CD4-positive, alpha-beta T cell (primary cell): ENCODE measurements at regions of chr11 and their contacts with region 1.

Region 1: DNA sequence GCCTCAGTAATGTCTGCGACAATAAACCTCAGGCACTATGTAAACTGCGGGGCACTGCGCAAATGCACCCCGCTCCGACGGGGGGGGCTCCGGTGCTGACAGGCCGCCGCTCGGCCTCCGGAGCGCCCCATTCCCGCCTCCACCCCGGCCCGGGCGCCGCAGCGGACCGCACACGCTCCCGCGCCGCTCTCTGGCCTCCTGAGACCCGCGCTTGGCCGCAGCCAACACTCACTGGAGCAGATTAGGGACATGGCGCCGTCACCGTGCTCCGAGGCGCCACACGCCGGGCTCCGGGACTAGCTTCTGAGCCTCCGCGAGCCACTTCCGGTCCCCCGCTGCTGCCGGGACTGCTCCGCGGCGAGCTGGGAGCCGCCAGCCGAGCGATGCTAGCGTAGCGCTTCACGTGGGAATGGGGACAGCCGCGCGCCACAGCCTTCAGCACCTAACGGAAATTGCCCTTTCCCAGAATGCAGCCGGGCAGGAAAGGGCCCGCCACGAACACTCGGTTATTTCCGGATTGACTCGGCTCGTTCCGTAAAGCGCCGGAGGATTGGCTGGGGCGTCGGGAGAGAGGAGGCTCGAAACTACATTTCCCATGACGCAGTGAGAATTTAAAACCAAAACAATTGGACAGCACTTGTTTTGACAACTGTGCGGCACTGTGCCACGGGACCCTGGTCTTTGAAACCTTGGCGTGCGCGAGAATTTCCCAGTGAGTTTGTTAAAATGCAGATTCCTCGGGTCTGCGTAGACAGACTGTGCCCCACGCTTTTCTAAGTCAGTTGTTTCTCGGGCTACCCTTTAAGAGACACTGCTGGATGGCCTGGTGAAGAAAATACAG is at the start of gene PRPF19:
- DNase-seq: peak; percentile 97 to 100 (median 99)
- ATAC-seq: peak; percentile 93
- H3K4me3 ChIP-seq: peak within 1 kb of the TSS; percentile 66
- H3K4me3 Mint-ChIP-seq: peak within 1 kb of the TSS; percentile 93
- H3K27ac ChIP-seq: peak within 1 kb of the TSS; percentile 85 to 93
- H3K27ac Mint-ChIP-seq: peak within 1 kb of the TSS; percentile 96
- H3K4me1 ChIP-seq: peaks cover 42% of the 10 kb centered on the region
- H3K4me1 Mint-ChIP-seq: peaks cover 56% of the 10 kb centered on the region
- H3K27me3 ChIP-seq: no peaks in the 10 kb centered on the region
- H3K27me3 Mint-ChIP-seq: no peaks in the 10 kb centered on the region
- CTCF ChIP-seq: no peak
- total RNA-seq, gene PRPF19: 63.2 to 67.3 TPM

Region 2: GRCh38 chr11:60265373-60266214 is 640.8 kb before region 1 on chr11:
- CTCF ChIA-PET with region 1: no interaction called
- POLR2A ChIA-PET with region 1: no interaction called
- intact Hi-C with region 1: no loop called
- DNase-seq: peak in 3 of 14 experiments; percentile 24 to 51 (median 46)
- ATAC-seq: no peak
- H3K4me3 ChIP-seq: no peak overlapping the region
- H3K4me3 Mint-ChIP-seq: no peak overlapping the region
- H3K27ac ChIP-seq: no peak overlapping the region
- H3K27ac Mint-ChIP-seq: no peak overlapping the region
- H3K4me1 ChIP-seq: no peaks in the 10 kb centered on the region
- H3K4me1 Mint-ChIP-seq: no peaks in the 10 kb centered on the region
- H3K27me3 ChIP-seq: no peaks in the 10 kb centered on the region
- H3K27me3 Mint-ChIP-seq: peaks cover 9% of the 10 kb centered on the region
- CTCF ChIP-seq: peak; percentile 64

Region 3: GRCh38 chr11:60841797-60842667 is 64.3 kb before region 1 on chr11 and contains the start of gene CCDC86:
- CTCF ChIA-PET with region 1: no interaction called
- POLR2A ChIA-PET with region 1: interaction called, 3 read pairs
- intact Hi-C with region 1: loop called (anchors 2 to 5 kb)
- DNase-seq: peak; percentile 96 to 100 (median 98)
- ATAC-seq: peak; percentile 96
- H3K4me3 ChIP-seq: peak within 1 kb of the TSS; percentile 99
- H3K4me3 Mint-ChIP-seq: peak within 1 kb of the TSS; percentile 78
- H3K27ac ChIP-seq: peak within 1 kb of the TSS; percentile 61 to 72
- H3K27ac Mint-ChIP-seq: peak within 1 kb of the TSS; percentile 81
- H3K4me1 ChIP-seq: peaks cover 48% of the 10 kb centered on the region
- H3K4me1 Mint-ChIP-seq: peaks cover 42% of the 10 kb centered on the region
- H3K27me3 ChIP-seq: no peaks in the 10 kb centered on the region
- H3K27me3 Mint-ChIP-seq: no peaks in the 10 kb centered on the region
- CTCF ChIP-seq: no peak
- total RNA-seq, gene CCDC86: 8.0 to 9.0 TPM

Region 4: GRCh38 chr11:61361686-61362541 is 455.6 kb after region 1 on chr11 and contains the starts of genes CYB561A3 and TMEM138:
- CTCF ChIA-PET with region 1: no interaction called
- POLR2A ChIA-PET with region 1: no interaction called
- intact Hi-C with region 1: loop called in 1 of 2 experiments (anchors 10 kb)
- DNase-seq: peak; percentile 75 to 94 (median 82)
- ATAC-seq: peak; percentile 84
- H3K4me3 ChIP-seq: peak within 1 kb of the TSS; percentile 99
- H3K4me3 Mint-ChIP-seq: peak within 1 kb of the TSS; percentile 99
- H3K27ac ChIP-seq: peak within 1 kb of the TSS; percentile 95 to 100
- H3K27ac Mint-ChIP-seq: peak within 1 kb of the TSS; percentile 100
- H3K4me1 ChIP-seq: peaks cover 35% of the 10 kb centered on the region
- H3K4me1 Mint-ChIP-seq: peaks cover 36% of the 10 kb centered on the region
- H3K27me3 ChIP-seq: no peaks in the 10 kb centered on the region
- H3K27me3 Mint-ChIP-seq: no peaks in the 10 kb centered on the region
- CTCF ChIP-seq: no peak
- total RNA-seq, gene CYB561A3: 24.4 to 25.8 TPM
- total RNA-seq, gene TMEM138: 59.2 to 60.9 TPM

Region 5: GRCh38 chr11:61581030-61581928 is 674.9 kb after region 1 on chr11 and contains the start of gene SYT7:
- CTCF ChIA-PET with region 1: no interaction called
- POLR2A ChIA-PET with region 1: no interaction called
- intact Hi-C with region 1: loop called in 1 of 2 experiments (anchors 5 kb)
- DNase-seq: peak; percentile 86 to 96 (median 94)
- ATAC-seq: peak; percentile 86
- H3K4me3 ChIP-seq: peak within 1 kb of the TSS; percentile 28
- H3K4me3 Mint-ChIP-seq: peak within 1 kb of the TSS; percentile 97
- H3K27ac ChIP-seq: no peak within 1 kb of the TSS
- H3K27ac Mint-ChIP-seq: peak within 1 kb of the TSS; percentile 78
- H3K4me1 ChIP-seq: peaks cover 19% of the 10 kb centered on the region
- H3K4me1 Mint-ChIP-seq: peaks cover 9% of the 10 kb centered on the region
- H3K27me3 ChIP-seq: peaks cover 23 to 27% of the 10 kb centered on the region in 2 experiments
- H3K27me3 Mint-ChIP-seq: peaks cover 57% of the 10 kb centered on the region
- CTCF ChIP-seq: no peak
- total RNA-seq, gene SYT7: not detected